Psoas muscle (tissue), 8 donors: ENCODE measurements at regions of chr10 and their contacts with region 1.

Region 1: DNA sequence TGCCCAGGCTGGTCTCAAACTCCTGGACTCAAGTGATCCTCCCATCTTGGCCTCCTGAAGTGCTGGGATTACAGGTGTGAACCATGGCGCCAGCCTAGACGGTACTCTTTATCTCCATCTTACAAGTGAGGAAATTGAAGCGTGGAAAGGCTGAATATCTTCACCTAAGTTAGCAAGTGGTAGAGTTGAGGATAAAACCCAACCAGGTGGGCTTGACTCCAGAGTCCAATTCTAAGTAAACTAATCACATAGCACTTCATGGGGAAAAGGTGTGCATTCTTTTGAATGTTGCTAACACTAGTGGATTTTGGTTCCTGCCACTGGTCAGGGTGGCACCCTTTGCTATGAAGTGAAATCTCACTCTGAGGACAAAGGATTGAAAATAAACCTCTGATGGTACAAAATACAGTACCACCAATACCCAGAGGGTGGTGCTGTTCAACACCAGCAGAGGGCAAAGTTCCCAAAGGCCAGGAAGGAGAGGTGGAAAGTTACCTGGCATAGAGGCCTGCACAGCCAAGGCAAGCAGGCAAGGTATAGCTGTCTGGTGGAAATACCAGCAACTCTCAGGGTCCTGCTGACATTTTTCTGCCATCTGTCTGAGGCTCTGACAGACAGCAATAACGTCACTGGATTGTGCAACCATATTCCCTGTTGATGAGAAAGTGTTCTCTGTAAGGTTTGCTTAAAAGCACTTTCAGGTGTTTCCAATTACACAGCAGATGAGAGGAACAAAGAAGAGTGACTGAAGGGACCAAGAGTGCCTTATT is 17.6 kb downstream of the ZDHHC16 start:
- DNase-seq: no peak
- ATAC-seq: peak; percentile 81 to 87 (median 85)
- H3K4me3 ChIP-seq: no peak overlapping the region
- H3K27ac ChIP-seq: peak overlapping the region; percentile 64
- H3K4me1 ChIP-seq: peaks cover 7% of the 10 kb centered on the region
- H3K27me3 ChIP-seq: no peaks in the 10 kb centered on the region
- CTCF ChIP-seq: peak; percentile 93

Region 2: DNA sequence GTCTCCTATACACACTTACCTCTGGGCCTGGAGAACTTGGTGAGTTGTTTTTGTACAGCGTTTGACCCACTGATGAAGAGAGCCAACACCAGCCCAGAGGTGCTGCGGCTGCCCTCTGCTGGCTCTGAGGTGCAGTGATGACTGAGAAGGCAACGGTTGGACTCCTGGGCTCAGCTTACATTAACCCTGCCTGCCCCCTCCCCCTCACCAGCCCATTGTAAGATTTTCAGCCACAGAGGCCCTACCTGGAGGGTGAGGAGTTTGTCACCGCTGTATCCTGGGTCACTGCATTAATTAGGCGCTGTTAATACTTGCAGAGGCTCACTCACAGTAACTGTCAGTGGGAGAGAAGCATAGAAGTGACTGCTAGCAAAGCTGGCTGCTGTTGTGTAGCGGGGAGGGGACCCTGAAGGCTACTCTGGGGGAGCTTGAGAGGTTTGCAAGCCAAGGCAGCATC is 90.1 kb after region 1 on chr10:
- intact Hi-C with region 1: loop called (anchors 1 to 5 kb)
- DNase-seq: peak; percentile 72 to 88
- ATAC-seq: peak; percentile 73 to 93 (median 91)
- H3K4me3 ChIP-seq: no peak overlapping the region
- H3K27ac ChIP-seq: no peak overlapping the region
- H3K4me1 ChIP-seq: peaks cover 45% of the 10 kb centered on the region
- H3K27me3 ChIP-seq: no peaks in the 10 kb centered on the region
- CTCF ChIP-seq: peak; percentile 80